GM13976 (cell line): ENCODE measurements at regions of chr19 and their contacts with region 1.

Region 1: DNA sequence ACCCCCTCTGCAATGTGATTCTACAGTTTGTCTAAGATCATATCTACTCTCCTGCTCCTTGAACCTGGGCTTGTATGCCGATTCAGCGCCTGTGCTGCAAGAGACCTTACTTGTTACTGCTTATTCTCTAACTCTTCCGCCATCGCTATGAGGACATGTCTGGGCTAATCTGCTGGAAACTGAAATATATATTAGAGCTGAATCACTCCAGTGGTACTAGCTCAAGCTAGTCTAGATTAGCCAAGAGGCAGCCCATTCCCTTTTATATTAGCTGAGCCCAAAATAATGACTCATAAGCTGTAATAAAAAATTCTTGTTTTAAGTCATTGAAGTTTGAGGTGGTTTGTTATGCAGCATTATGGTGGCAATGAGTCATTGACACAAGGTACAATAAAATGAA is 52.8 kb downstream of the SLC6A16 start:
- DNase-seq: no peak
- CTCF ChIP-seq: no peak

Region 2: GRCh38 chr19:49148784-49149651 is 123.2 kb before region 1 on chr19:
- in situ Hi-C with region 1: no loop called
- DNase-seq: peak; percentile 93
- CTCF ChIP-seq: no peak

Region 3: DNA sequence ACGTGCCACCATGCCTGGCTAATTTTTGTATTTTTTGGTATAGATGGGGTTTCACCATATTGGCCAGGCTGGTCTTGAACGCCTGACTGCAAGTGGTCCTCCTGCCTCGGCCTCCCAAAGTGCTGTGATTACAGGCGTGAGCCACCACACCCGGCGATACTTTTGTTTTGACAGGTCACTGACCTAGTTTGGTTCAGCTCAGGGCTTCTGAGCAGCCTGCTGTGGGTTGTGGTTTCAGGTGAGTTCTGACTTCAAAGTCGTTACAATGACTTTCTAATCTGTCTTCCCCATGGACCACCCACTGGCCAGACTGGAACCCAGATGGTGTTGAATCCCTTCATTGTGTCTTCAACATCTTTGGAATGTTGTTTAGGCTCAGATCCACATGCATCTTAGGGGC is 40.8 kb before region 1 on chr19:
- in situ Hi-C with region 1: no loop called
- DNase-seq: peak; percentile 70
- CTCF ChIP-seq: no peak

Region 4: DNA sequence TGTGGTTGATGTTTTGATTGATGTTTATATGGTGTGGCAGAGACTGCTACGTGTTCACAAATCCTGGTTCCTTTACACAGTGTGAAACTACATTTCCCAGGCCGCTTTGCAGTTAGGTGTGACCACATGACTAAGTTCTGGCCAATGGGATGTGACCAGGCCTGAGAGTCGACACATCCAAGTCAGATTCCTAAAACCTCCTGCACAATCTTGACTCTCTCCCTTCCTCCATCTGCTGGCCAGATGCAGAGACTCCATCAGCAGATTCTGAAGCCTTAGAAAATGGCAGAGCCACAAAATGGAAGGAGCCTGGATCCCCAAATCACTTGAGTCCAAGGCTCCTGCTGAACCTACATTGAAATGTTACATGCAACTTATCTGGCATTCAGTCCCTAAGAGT is 75.7 kb after region 1 on chr19:
- in situ Hi-C with region 1: no loop called
- DNase-seq: no peak
- CTCF ChIP-seq: no peak

Region 5: GRCh38 chr19:49443366-49444099 is 171.3 kb after region 1 on chr19:
- in situ Hi-C with region 1: loop called (anchors 25 kb)
- DNase-seq: peak; percentile 92
- CTCF ChIP-seq: peak; percentile 98